CD4-positive, alpha-beta T cell (primary cell): ENCODE measurements at regions of chr19 and their contacts with region 1.

Region 1: GRCh38 chr19:5048091-5048726 is 79.3 kb downstream of the KDM4B start:
- DNase-seq: peak; percentile 26 to 77 (median 44)
- ATAC-seq: peak; percentile 81
- H3K4me3 ChIP-seq: no peak overlapping the region
- H3K4me3 Mint-ChIP-seq: no peak overlapping the region
- H3K27ac ChIP-seq: no peak overlapping the region
- H3K27ac Mint-ChIP-seq: no peak overlapping the region
- H3K4me1 ChIP-seq: peaks cover 14% of the 10 kb centered on the region
- H3K4me1 Mint-ChIP-seq: peaks cover 4% of the 10 kb centered on the region
- H3K27me3 ChIP-seq: no peaks in the 10 kb centered on the region
- H3K27me3 Mint-ChIP-seq: no peaks in the 10 kb centered on the region
- CTCF ChIP-seq: peak; percentile 83

Region 2: DNA sequence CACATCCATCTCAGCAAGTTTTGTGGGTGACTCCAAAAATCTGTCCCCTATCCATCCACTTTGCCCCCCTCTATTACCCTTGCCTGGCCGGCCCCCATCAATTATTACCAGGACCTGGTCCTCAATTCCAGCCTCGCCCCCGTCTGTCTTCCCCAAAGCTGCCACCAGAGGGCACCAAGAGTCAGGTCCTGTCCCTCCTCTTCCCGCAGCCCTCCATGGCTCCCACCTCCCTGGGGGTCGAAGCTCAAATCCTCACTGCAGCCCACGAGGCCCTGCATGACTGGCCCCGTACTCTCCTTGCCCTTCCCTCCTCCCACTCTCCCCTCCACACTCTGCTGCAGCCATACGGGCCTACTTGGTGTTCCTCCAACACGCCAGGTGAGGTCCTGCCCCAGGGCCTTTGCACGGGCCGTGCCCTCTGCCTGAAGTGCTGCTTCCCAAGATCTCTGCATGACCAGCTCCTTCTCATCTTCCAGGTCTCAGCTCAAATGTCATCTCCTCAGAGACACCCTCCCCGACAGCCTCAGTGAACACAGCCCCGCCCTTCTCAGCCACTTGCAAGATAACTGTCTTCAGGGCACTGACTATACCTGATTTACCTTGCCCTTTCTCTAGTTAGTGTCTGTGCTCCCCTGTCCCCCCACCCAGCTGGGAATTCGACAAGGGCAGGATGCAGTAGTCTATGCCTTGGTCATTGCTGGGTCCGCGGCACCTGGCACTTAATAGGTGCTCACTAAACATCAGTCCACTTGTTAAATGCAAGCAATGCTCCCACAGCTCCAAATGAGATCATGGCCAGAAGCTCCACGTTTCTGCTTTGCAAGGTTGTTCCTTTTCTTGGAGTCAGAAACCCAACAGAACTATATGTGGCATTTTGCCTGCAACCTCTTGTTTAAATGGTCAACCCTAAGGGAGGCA is 471.9 kb before region 1 on chr19:
- CTCF ChIA-PET with region 1: no interaction called
- POLR2A ChIA-PET with region 1: no interaction called
- intact Hi-C with region 1: no loop called
- DNase-seq: peak; percentile 52 to 78 (median 64)
- ATAC-seq: peak; percentile 62
- H3K4me3 ChIP-seq: no peak overlapping the region
- H3K4me3 Mint-ChIP-seq: no peak overlapping the region
- H3K27ac ChIP-seq: no peak overlapping the region
- H3K27ac Mint-ChIP-seq: no peak overlapping the region
- H3K4me1 ChIP-seq: no peaks in the 10 kb centered on the region
- H3K4me1 Mint-ChIP-seq: no peaks in the 10 kb centered on the region
- H3K27me3 ChIP-seq: peaks cover 39 to 58% of the 10 kb centered on the region in 2 experiments
- H3K27me3 Mint-ChIP-seq: peaks cover 47% of the 10 kb centered on the region
- CTCF ChIP-seq: peak; percentile 65

Region 3: GRCh38 chr19:4879041-4879440 is 169.2 kb before region 1 on chr19:
- CTCF ChIA-PET with region 1: no interaction called
- POLR2A ChIA-PET with region 1: no interaction called
- intact Hi-C with region 1: no loop called
- DNase-seq: no peak
- ATAC-seq: no peak
- H3K4me3 ChIP-seq: no peak overlapping the region
- H3K4me3 Mint-ChIP-seq: no peak overlapping the region
- H3K27ac ChIP-seq: no peak overlapping the region
- H3K27ac Mint-ChIP-seq: no peak overlapping the region
- H3K4me1 ChIP-seq: peaks cover 12% of the 10 kb centered on the region
- H3K4me1 Mint-ChIP-seq: no peaks in the 10 kb centered on the region
- H3K27me3 ChIP-seq: no peaks in the 10 kb centered on the region
- H3K27me3 Mint-ChIP-seq: peaks cover under 1% of the 10 kb centered on the region
- CTCF ChIP-seq: no peak

Region 4: DNA sequence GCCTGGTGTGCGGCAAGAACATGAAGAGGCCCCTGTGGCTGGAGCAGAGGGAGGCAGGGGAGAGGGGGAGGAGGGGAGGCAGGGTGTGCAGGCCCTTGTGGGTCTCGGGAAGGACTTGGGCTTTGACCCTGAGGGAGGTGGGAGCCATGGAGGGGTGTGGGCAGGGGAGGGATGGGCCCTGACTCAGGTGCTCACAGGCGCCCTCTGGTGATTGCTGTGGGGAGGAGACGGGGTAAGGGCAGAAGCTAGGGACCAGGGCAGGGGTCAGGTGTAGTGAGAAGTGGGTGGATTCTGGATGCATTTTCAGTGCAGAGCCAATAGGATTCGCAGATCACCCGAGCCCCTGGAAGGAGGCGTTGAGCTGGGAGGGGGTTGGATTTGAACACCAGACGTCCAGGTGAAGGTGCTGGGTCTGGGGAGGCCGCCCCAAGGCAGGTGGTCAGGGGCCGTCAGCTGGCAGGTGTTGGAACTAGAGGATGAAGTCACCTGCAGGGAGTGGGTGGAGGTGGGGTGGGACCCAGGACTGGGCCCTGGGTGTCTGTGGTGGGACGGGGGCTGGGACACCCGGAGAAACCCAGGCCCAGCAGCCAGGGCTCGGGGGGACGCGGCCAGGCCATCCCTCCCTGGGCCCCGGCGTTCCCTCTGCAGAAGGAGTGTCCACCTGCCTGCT is 106.1 kb after region 1 on chr19:
- CTCF ChIA-PET with region 1: no interaction called
- POLR2A ChIA-PET with region 1: no interaction called
- intact Hi-C with region 1: loop called in 1 of 2 experiments (anchors 1 kb)
- DNase-seq: peak in 12 of 14 experiments; percentile 21 to 66 (median 33)
- ATAC-seq: peak; percentile 55
- H3K4me3 ChIP-seq: no peak overlapping the region
- H3K4me3 Mint-ChIP-seq: no peak overlapping the region
- H3K27ac ChIP-seq: no peak overlapping the region
- H3K27ac Mint-ChIP-seq: no peak overlapping the region
- H3K4me1 ChIP-seq: no peaks in the 10 kb centered on the region
- H3K4me1 Mint-ChIP-seq: no peaks in the 10 kb centered on the region
- H3K27me3 ChIP-seq: no peaks in the 10 kb centered on the region
- H3K27me3 Mint-ChIP-seq: no peaks in the 10 kb centered on the region
- CTCF ChIP-seq: peak; percentile 34

Region 5: GRCh38 chr19:5170329-5170745 is 122.1 kb after region 1 on chr19:
- CTCF ChIA-PET with region 1: no interaction called
- POLR2A ChIA-PET with region 1: no interaction called
- intact Hi-C with region 1: loop called in 1 of 2 experiments (anchors 5 kb)
- DNase-seq: peak in 13 of 14 experiments; percentile 22 to 62 (median 45)
- ATAC-seq: no peak
- H3K4me3 ChIP-seq: no peak overlapping the region
- H3K4me3 Mint-ChIP-seq: no peak overlapping the region
- H3K27ac ChIP-seq: no peak overlapping the region
- H3K27ac Mint-ChIP-seq: no peak overlapping the region
- H3K4me1 ChIP-seq: no peaks in the 10 kb centered on the region
- H3K4me1 Mint-ChIP-seq: no peaks in the 10 kb centered on the region
- H3K27me3 ChIP-seq: no peaks in the 10 kb centered on the region
- H3K27me3 Mint-ChIP-seq: no peaks in the 10 kb centered on the region
- CTCF ChIP-seq: peak; percentile 42

Region 6: DNA sequence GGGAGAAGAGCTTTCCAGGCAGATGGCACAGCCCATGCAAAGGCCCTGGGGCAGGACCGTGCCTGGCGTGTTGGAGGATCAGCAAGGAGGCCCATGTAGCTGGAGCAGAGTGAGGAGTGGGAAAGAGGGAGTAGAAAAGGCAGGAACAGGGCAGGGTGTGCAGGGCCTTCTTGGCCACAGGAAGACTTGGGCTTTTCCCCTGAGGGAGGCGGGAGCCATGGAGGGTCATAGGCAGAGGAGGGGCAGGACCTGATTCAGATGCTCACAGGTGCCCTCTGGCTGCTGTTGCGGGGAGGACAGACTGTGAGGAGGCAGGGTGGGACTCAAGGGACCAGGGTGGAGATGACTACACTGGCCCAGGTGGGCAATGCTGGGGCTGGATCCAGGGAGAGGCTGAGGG is 306.2 kb after region 1 on chr19:
- CTCF ChIA-PET with region 1: no interaction called
- POLR2A ChIA-PET with region 1: no interaction called
- intact Hi-C with region 1: loop called in 1 of 2 experiments (anchors 10 kb)
- DNase-seq: peak in 1 of 14 experiments; percentile 14
- ATAC-seq: no peak
- H3K4me3 ChIP-seq: no peak overlapping the region
- H3K4me3 Mint-ChIP-seq: no peak overlapping the region
- H3K27ac ChIP-seq: no peak overlapping the region
- H3K27ac Mint-ChIP-seq: no peak overlapping the region
- H3K4me1 ChIP-seq: no peaks in the 10 kb centered on the region
- H3K4me1 Mint-ChIP-seq: no peaks in the 10 kb centered on the region
- H3K27me3 ChIP-seq: peaks cover 17% of the 10 kb centered on the region in 2 experiments
- H3K27me3 Mint-ChIP-seq: peaks cover 56% of the 10 kb centered on the region
- CTCF ChIP-seq: no peak

Region 7: GRCh38 chr19:5480427-5480836 is 432.2 kb after region 1 on chr19:
- CTCF ChIA-PET with region 1: no interaction called
- POLR2A ChIA-PET with region 1: no interaction called
- intact Hi-C with region 1: loop called (anchors 1 to 2 kb)
- DNase-seq: peak in 12 of 14 experiments; percentile 4 to 52 (median 18)
- ATAC-seq: no peak
- H3K4me3 ChIP-seq: no peak overlapping the region
- H3K4me3 Mint-ChIP-seq: no peak overlapping the region
- H3K27ac ChIP-seq: no peak overlapping the region
- H3K27ac Mint-ChIP-seq: no peak overlapping the region
- H3K4me1 ChIP-seq: no peaks in the 10 kb centered on the region
- H3K4me1 Mint-ChIP-seq: no peaks in the 10 kb centered on the region
- H3K27me3 ChIP-seq: peaks cover 10 to 25% of the 10 kb centered on the region in 2 experiments
- H3K27me3 Mint-ChIP-seq: peaks cover 72% of the 10 kb centered on the region
- CTCF ChIP-seq: peak; percentile 43

Region 8: DNA sequence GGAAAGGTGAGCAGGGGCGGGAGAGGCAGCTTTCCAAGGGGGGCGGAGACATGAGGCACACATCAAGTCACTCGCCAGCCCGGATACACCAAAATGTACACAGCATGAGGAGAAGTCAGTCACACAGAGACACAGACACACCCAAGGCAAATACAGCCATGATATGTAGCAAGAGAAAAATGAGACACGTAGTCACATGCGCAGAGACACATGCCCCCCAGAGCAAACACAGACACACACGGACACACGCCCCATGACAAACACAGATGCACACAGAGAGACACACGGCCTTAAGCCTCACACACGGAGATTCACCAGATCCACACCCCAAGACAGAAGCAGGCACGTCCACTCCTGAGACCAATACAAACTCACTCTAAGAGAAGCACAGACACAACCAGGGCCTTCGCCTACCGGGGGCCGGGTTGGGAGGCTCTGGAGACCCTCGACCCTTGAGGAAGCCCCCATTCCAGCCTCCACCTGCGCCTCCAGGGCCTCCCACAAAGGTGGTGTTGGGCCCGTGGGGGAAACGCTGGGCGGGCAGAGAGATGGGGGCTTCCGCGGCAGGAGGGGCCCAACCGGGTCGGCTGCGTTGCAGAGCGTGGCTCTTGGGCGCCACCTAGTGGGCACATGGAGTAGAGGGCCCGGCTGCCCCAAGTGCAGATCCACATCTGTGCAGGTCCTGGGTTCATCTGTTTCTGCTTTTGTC is 529.7 kb after region 1 on chr19:
- CTCF ChIA-PET with region 1: no interaction called
- POLR2A ChIA-PET with region 1: no interaction called
- intact Hi-C with region 1: loop called (anchors 2 kb)
- DNase-seq: peak; percentile 50 to 86 (median 65)
- ATAC-seq: peak; percentile 88
- H3K4me3 ChIP-seq: no peak overlapping the region
- H3K4me3 Mint-ChIP-seq: no peak overlapping the region
- H3K27ac ChIP-seq: no peak overlapping the region
- H3K27ac Mint-ChIP-seq: no peak overlapping the region
- H3K4me1 ChIP-seq: peaks cover 10% of the 10 kb centered on the region
- H3K4me1 Mint-ChIP-seq: peaks cover 10% of the 10 kb centered on the region
- H3K27me3 ChIP-seq: no peaks in the 10 kb centered on the region
- H3K27me3 Mint-ChIP-seq: no peaks in the 10 kb centered on the region
- CTCF ChIP-seq: peak; percentile 97